Psoas muscle (tissue), 8 donors: ENCODE measurements at regions of chr14 and their contacts with region 1.

Region 1: DNA sequence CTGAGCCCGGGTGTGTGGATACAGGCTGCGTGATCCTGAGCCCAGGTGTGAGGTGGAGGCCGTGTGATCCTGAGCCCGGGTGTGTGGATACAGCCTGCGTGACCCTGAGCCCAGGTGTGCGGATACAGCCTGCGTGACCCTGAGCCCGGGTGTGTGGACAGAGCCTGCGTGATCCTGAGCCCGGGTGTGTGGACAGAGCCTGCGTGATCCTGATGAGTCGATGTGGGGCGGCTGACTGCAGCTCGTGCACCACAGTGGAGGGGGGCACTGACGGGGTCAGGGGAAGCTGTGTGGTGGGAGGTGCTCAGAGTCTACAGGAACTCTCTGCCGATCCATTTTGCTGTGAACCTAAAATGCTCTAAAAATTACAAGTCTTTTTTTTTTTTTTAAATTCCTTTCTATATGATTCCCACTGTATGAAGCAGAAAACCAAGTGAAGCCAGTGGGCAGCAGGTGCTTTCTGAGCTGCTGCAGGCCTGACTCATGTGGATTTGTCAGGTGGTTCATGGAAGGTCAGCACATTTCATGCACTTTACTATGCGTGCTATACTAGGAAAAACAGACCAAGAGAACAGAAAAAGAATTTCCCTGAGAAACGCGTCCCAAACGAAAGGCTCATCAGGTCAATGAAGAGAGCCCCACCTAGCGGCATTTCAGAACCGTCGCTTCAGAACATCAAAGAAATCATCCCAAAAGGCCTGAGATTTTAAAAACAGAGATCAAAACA is 19.3 kb downstream of the BRF1 start:
- DNase-seq: no peak
- ATAC-seq: peak; percentile 75 to 84 (median 78)
- H3K4me3 ChIP-seq: no peak overlapping the region
- H3K27ac ChIP-seq: peak overlapping the region; percentile 33
- H3K4me1 ChIP-seq: peaks cover 17% of the 10 kb centered on the region
- H3K27me3 ChIP-seq: no peaks in the 10 kb centered on the region
- CTCF ChIP-seq: peak; percentile 69

Region 2: DNA sequence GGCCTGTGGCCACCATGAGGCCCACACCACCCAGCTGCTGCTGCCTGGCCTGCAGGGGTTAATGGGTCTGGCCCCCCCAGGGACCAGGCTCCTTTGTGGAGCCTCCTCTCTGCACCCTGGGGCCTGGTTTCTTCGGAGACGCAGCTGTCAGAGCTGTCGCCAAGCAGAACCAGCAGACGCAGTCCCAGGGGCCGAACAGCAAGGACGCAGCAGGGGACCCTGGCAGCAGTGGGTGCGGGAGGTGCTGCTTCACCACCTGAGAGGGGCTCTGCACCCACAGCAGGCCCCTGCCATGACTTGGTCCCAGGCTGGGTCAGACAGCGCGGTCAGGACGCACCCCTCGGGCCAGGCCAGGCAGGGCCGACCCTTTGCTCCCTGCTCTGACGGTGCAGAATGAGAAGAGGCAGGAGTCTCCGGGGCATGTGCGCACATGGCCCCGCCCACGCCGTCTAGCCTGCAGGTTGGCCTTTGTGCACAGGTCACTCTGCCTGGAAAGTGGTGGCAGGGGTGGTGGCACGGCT is 143.5 kb before region 1 on chr14:
- intact Hi-C with region 1: no loop called
- DNase-seq: no peak
- ATAC-seq: peak in 2 of 4 donors; percentile 7 to 11
- H3K4me3 ChIP-seq: no peak overlapping the region
- H3K27ac ChIP-seq: no peak overlapping the region
- H3K4me1 ChIP-seq: no peaks in the 10 kb centered on the region
- H3K27me3 ChIP-seq: no peaks in the 10 kb centered on the region
- CTCF ChIP-seq: no peak

Region 3: GRCh38 chr14:105203057-105203531 is 78.4 kb before region 1 on chr14:
- intact Hi-C with region 1: loop called (anchors 1 to 5 kb)
- DNase-seq: peak; percentile 80 to 88
- ATAC-seq: peak; percentile 62 to 82 (median 70)
- H3K4me3 ChIP-seq: no peak overlapping the region
- H3K27ac ChIP-seq: no peak overlapping the region
- H3K4me1 ChIP-seq: peaks cover 24% of the 10 kb centered on the region
- H3K27me3 ChIP-seq: peaks cover 0 to 20% (median under 1%) of the 10 kb centered on the region in 3 donors
- CTCF ChIP-seq: peak; percentile 94